Sigmoid colon (tissue), 7 donors: ENCODE measurements at regions of chr13 and their contacts with region 1.

Region 1: GRCh38 chr13:47146136-47146535 is 249.3 kb upstream of the HTR2A start:
- DNase-seq: no peak
- H3K4me3 ChIP-seq: no peak overlapping the region
- H3K27ac ChIP-seq: no peak overlapping the region
- H3K4me1 ChIP-seq: peaks cover 0 to 12% (median 0%) of the 10 kb centered on the region in 4 donors
- H3K27me3 ChIP-seq: no peaks in the 10 kb centered on the region
- CTCF ChIP-seq: no peak
- EP300 ChIP-seq: no peak
- POLR2A ChIP-seq: no peak

Region 2: GRCh38 chr13:47076500-47076899 is 69.6 kb before region 1 on chr13:
- intact Hi-C with region 1: no loop called
- DNase-seq: no peak
- H3K4me3 ChIP-seq: no peak overlapping the region
- H3K27ac ChIP-seq: no peak overlapping the region
- H3K4me1 ChIP-seq: no peaks in the 10 kb centered on the region
- H3K27me3 ChIP-seq: no peaks in the 10 kb centered on the region
- CTCF ChIP-seq: no peak
- EP300 ChIP-seq: no peak
- POLR2A ChIP-seq: no peak

Region 3: DNA sequence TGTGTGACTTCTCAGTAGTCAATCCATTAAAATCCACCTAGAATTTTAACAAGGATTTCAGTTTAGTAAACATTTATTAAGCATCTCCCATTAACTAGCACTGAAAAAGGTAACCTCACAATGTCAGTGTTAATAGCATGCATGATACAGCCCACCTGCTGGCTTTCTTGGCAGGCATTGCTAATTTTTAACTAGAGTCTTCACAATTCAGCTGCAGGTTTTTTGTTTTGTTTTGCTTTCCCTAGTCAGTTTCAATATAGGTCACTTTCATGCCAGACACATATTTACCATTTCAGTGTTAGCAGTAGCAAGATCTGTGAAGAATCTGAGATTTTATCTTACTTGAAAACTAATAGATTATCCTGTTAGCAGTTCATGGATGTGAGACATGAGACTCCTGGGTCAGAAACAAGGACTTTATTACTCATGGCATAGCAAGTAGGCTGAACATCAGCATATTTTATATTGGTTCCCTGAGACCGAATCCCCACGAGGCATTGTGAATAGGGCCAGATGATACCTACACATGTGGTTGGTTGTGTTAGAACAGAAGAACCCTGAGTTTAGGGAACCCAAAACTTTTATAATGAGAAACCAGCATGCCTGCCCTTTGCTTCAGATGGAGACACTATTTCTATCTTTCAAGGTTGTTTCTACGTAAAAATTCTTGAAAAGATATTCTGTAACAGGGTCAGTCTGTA is 51.3 kb before region 1 on chr13:
- intact Hi-C with region 1: loop called (anchors 2 kb)
- DNase-seq: no peak
- H3K4me3 ChIP-seq: no peak overlapping the region
- H3K27ac ChIP-seq: no peak overlapping the region
- H3K4me1 ChIP-seq: peaks cover 0 to 37% (median 13%) of the 10 kb centered on the region in 4 donors
- H3K27me3 ChIP-seq: no peaks in the 10 kb centered on the region
- CTCF ChIP-seq: no peak
- EP300 ChIP-seq: no peak
- POLR2A ChIP-seq: no peak